ENCODE measurements at regions of chr2 and their contacts with region 1.

Region 1: DNA sequence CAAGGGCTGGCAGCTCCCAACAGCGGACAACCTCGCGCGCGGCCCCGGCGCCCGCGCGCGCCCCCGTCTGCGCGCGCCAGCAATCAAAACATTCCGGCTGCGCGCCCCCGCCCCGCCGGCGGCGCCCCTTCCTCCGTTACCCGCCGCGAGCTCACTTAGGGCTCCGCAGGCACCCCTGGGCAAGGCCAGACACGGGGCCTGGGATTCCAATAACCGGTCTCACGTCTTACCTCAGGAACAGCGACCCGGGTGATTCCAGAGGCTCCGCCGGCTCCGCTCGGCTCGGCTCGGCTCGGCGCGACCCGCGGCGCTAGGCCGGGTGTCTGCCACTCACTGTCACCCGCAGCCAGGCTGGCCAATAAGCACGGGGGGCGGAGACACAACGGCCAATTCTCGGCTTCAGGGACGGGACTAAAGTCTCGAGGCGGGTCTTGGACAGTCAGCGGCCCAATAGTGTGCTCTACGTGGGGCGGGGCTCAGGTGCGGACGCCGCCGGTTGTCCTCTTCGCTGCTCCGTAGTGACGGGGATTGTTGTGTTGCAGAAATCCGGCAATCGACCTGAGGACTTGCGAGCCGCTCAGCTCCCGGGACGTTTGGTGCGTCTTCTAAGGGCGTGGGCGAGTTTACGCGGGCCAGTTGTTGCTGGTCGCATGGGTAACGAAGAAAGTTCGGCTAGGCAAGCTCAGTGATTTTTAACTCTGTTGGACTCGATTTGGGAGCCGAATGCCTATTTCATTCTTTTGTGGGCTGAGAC is at the starts of genes ANKZF1 and ATG9A:
- DNase-seq: peak; percentile 100
- H3K4me3 ChIP-seq: peak within 1 kb of the TSS; percentile 57 to 79 (median 68)
- H3K27ac ChIP-seq: peak within 1 kb of the TSS; percentile 89 to 94 (median 94)
- H3K4me1 ChIP-seq: peaks cover 0 to 35% (median 31%) of the 10 kb centered on the region in 4 donors
- H3K27me3 ChIP-seq: no peaks in the 10 kb centered on the region
- CTCF ChIP-seq: no peak
- EP300 ChIP-seq: peak in 1 of 4 donors; percentile 64
- POLR2A ChIP-seq: peak; percentile 68 to 73
- total RNA-seq, gene ANKZF1: 28.1 to 52.6 (median 41.1) TPM
- total RNA-seq, gene ATG9A: 28.8 to 32.0 (median 29.8) TPM

Region 2: GRCh38 chr2:219218732-219219701 is 10.5 kb before region 1 on chr2 and contains the start of gene ABCB6:
- intact Hi-C with region 1: loop called (anchors 1 kb)
- DNase-seq: peak; percentile 99
- H3K4me3 ChIP-seq: peak within 1 kb of the TSS; percentile 41 to 62 (median 54)
- H3K27ac ChIP-seq: peak within 1 kb of the TSS; percentile 84 to 98 (median 96)
- H3K4me1 ChIP-seq: peaks cover 0 to 37% (median 32%) of the 10 kb centered on the region in 4 donors
- H3K27me3 ChIP-seq: no peaks in the 10 kb centered on the region
- CTCF ChIP-seq: no peak
- EP300 ChIP-seq: no peak
- POLR2A ChIP-seq: peak in 1 of 2 donors; percentile 47
- total RNA-seq, gene ABCB6: 11.8 to 23.0 (median 16.1) TPM

Region 3: DNA sequence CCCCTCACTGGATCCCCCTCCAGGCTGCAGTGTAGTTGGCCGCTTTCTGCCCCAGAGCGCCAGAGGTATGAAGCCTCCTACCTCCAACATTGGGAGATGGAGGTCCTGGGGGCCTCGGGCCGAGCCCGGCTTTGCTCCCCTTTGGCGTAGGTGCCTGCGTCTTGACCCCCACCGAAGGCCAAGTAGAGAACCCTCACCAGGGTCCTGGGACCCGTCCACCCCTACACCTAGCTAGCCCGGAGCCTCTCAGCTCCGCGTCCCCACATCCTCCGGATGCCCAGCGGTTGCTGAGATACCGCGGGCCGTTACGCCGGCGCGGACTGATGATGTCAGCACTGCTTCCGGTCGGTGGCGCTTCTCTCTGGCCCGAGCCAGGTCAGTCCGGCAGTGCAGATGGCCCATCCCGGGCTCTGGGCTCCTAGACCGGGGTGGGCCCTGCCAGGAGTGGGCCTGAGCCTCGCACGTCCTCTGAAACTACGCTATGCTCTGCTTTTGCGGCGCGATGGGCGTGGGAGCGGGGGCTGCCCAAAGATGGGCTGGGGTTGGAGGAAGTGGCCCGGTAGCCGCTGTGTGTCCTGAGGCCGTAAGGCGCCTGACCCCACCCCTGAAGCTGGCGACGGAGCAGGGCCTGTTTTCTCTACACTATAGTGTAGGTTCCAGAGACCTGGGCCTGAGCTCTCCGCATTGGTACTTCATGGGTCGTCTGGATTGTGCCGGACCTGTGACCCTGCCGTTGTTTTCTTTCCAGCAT is 15.8 kb after region 1 on chr2 and contains the starts of genes GLB1L and STK16:
- intact Hi-C with region 1: loop called (anchors 2 kb)
- DNase-seq: peak; percentile 97
- H3K4me3 ChIP-seq: peak within 1 kb of the TSS; percentile 62 to 89 (median 74)
- H3K27ac ChIP-seq: peak within 1 kb of the TSS; percentile 87 to 97 (median 92)
- H3K4me1 ChIP-seq: peaks cover 0 to 47% (median 44%) of the 10 kb centered on the region in 4 donors
- H3K27me3 ChIP-seq: no peaks in the 10 kb centered on the region
- CTCF ChIP-seq: no peak
- EP300 ChIP-seq: peak in 1 of 4 donors; percentile 59
- POLR2A ChIP-seq: peak; percentile 83
- total RNA-seq, gene GLB1L: 6.9 to 26.0 (median 8.2) TPM
- total RNA-seq, gene STK16: 12.2 to 19.9 (median 18.2) TPM

Region 4: DNA sequence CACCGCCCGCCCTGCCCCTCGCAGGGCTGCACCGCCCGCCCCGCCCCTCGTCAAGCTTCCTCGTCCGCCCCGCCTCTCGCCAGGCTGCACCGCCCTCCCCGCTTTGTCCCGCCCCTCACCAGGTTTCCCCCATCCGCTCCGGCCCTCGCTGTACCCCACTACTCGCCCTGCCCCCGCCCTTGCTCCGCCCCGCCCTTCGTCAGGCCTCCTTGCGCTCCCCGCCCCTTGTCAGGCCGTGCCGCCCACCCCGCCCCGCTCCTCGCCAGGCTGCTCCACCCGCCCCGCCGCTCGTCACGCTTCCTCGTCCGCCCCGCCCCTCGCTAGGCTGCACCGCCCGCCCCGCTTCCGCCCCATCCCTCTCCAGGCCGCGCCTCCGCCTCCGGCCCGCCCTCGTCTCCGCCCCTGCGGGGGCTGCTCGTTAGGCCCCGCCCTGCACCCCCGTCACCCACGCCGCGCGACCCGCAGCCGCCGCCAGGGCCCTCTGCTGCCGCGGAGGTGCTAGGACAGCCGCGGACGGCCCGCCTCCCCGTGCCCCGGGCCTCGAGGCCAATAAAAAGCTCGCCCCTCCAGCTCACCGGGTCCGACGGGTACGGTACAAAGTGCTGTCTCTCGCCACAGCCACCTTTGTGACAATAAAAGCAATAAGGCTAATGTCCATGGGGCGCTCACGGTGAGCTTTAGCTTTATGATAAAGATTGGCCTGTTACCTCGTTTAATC is 158.8 kb after region 1 on chr2:
- intact Hi-C with region 1: loop called (anchors 10 kb)
- DNase-seq: peak; percentile 100
- H3K4me3 ChIP-seq: peak overlapping the region; percentile 16 to 88 (median 84)
- H3K27ac ChIP-seq: peak overlapping the region; percentile 94 to 97 (median 96)
- H3K4me1 ChIP-seq: peaks cover 0 to 32% (median 26%) of the 10 kb centered on the region in 4 donors
- H3K27me3 ChIP-seq: no peaks in the 10 kb centered on the region
- CTCF ChIP-seq: peak; percentile 35 to 68 (median 48)
- EP300 ChIP-seq: no peak
- POLR2A ChIP-seq: no peak

Region 5: DNA sequence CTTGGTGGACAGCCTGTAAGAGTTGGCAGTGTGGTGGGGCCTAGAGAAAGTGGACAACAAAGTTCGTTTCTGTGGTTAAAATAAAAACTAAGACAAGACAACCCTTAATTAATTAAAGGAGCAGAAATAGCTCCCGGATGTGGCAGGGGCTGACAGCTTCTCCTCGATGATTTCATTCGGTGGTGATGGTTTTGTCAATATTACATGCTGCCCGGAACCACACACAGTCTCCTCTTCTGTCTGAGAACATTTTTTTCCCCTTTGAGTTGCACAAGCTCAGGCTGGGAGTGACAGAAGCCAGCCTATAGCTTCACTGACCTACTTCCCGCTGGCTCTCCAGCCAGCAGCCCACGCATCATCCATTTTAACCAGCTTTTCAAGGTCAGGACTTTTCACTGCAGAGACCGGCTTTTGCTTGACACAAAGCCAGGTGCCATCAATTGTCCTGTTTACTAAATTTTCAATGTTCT is 776.7 kb after region 1 on chr2:
- intact Hi-C with region 1: no loop called
- DNase-seq: no peak
- H3K4me3 ChIP-seq: no peak overlapping the region
- H3K27ac ChIP-seq: no peak overlapping the region
- H3K4me1 ChIP-seq: no peaks in the 10 kb centered on the region
- H3K27me3 ChIP-seq: no peaks in the 10 kb centered on the region
- CTCF ChIP-seq: no peak
- EP300 ChIP-seq: no peak
- POLR2A ChIP-seq: no peak